ENCODE measurements at regions of chr11 and their contacts with region 1.

Region 1: DNA sequence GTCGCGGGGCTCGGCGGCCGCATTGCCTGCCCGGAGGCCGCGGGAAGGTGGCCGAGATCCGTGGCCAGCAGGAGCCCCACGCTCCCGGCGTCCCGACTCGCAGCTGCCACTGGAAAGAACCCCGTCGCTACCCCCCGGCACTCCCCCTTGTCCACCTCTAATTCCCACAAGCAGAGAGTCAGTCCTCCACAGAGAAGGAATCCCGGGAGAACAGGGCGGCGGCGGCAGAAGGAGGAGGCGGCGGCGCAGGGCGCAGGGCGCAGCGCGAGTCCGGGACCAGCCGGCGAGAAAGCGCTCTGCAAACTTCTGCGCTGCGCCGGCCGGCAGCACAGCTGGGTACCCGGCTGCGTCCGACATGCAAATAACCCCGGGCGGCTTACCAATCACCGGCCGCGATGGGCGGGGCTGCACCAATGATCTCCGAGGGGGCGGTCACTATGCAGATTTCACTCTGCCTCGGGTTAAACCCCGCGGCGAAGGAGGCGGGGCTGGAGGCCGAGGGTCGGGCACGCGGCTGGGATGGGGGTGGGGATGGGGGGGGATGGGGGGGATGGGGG is at the start of gene ABTB2:
- DNase-seq: peak; percentile 93 to 99
- H3K4me3 ChIP-seq: peak within 1 kb of the TSS; percentile 92
- H3K27ac ChIP-seq: peak within 1 kb of the TSS; percentile 67
- H3K4me1 ChIP-seq: peaks cover 41% of the 10 kb centered on the region
- H3K27me3 ChIP-seq: no peaks in the 10 kb centered on the region
- CTCF ChIP-seq: no peak
- total RNA-seq, gene ABTB2: 12.7 and 12.9 TPM in 2 replicates

Region 2: DNA sequence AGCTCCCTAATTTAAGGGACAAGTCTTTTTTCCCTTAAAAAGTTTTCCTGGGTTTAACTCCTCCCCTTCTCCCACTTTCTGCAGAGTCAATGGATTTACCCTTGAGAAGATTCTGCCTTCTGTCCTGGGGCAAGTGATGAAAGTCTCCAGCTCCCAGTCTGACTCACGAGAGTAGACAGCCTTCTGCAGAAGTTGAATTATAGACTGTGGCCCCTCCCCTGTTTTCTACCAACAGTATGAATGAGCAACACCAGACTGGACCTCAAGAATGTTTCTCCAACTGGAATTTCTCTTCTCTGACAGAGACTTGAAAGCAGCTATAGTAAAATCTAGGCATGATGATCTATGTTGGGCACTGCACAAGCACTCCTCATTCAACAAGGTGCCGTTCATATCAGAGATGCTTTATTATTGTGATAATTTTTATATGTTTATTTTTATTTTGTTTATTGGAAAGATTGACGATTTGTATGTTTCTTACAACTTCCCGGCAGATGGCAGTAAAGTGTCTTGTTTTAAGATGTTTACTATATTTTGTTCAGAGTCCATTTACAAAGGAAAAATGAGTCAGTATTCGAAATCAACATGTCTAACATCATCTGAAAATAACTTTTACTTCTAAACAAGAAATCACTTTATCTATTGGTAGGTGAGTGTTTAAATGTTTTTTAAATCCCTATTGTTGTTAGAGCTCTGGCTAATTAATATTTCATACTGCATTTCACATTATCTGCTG is 522.5 kb before region 1 on chr11:
- CTCF ChIA-PET with region 1: no interaction called
- POLR2A ChIA-PET with region 1: no interaction called
- intact Hi-C with region 1: loop called (anchors 1 kb)
- DNase-seq: peak; percentile 18 to 69
- H3K4me3 ChIP-seq: no peak overlapping the region
- H3K27ac ChIP-seq: no peak overlapping the region
- H3K4me1 ChIP-seq: peaks cover 32% of the 10 kb centered on the region
- H3K27me3 ChIP-seq: no peaks in the 10 kb centered on the region
- CTCF ChIP-seq: peak; percentile 79

Region 3: GRCh38 chr11:33996498-33997454 is 361.0 kb before region 1 on chr11:
- CTCF ChIA-PET with region 1: no interaction called
- POLR2A ChIA-PET with region 1: no interaction called
- intact Hi-C with region 1: loop called (anchors 1 kb)
- DNase-seq: peak; percentile 73 to 81
- H3K4me3 ChIP-seq: peak overlapping the region; percentile 17
- H3K27ac ChIP-seq: no peak overlapping the region
- H3K4me1 ChIP-seq: peaks cover 11% of the 10 kb centered on the region
- H3K27me3 ChIP-seq: no peaks in the 10 kb centered on the region
- CTCF ChIP-seq: peak; percentile 93

Region 4: GRCh38 chr11:34149786-34150185 is 208.0 kb before region 1 on chr11:
- CTCF ChIA-PET with region 1: no interaction called
- POLR2A ChIA-PET with region 1: no interaction called
- intact Hi-C with region 1: loop called (anchors 1 kb)
- DNase-seq: peak in 1 of 2 experiments; percentile 33
- H3K4me3 ChIP-seq: no peak overlapping the region
- H3K27ac ChIP-seq: no peak overlapping the region
- H3K4me1 ChIP-seq: no peaks in the 10 kb centered on the region
- H3K27me3 ChIP-seq: no peaks in the 10 kb centered on the region
- CTCF ChIP-seq: 0 out of 2 replicates have a peak, but pooled peaks have one; percentile 49

Region 5: GRCh38 chr11:34192481-34193401 is 165.0 kb before region 1 on chr11:
- CTCF ChIA-PET with region 1: no interaction called
- POLR2A ChIA-PET with region 1: interaction called, 16 read pairs
- intact Hi-C with region 1: loop called (anchors 1 kb)
- DNase-seq: peak; percentile 83 to 85
- H3K4me3 ChIP-seq: no peak overlapping the region
- H3K27ac ChIP-seq: peak overlapping the region; percentile 25; the same call in 1 of the 2 replicates
- H3K4me1 ChIP-seq: peaks cover 37% of the 10 kb centered on the region
- H3K27me3 ChIP-seq: no peaks in the 10 kb centered on the region
- CTCF ChIP-seq: no peak

Region 6: GRCh38 chr11:34274723-34275401 is 82.9 kb before region 1 on chr11:
- CTCF ChIA-PET with region 1: interaction called, 4 read pairs
- POLR2A ChIA-PET with region 1: no interaction called
- intact Hi-C with region 1: loop called (anchors 2 kb)
- DNase-seq: peak; percentile 99 to 100
- H3K4me3 ChIP-seq: peak overlapping the region; percentile 2; the same call in 1 of the 2 replicates
- H3K27ac ChIP-seq: peak overlapping the region; percentile 77
- H3K4me1 ChIP-seq: peaks cover 34% of the 10 kb centered on the region
- H3K27me3 ChIP-seq: no peaks in the 10 kb centered on the region
- CTCF ChIP-seq: no peak

Region 7: GRCh38 chr11:34327804-34328631 is 29.8 kb before region 1 on chr11:
- CTCF ChIA-PET with region 1: no interaction called
- POLR2A ChIA-PET with region 1: no interaction called
- intact Hi-C with region 1: no loop called
- DNase-seq: no peak
- H3K4me3 ChIP-seq: no peak overlapping the region
- H3K27ac ChIP-seq: no peak overlapping the region
- H3K4me1 ChIP-seq: peaks cover 52% of the 10 kb centered on the region
- H3K27me3 ChIP-seq: no peaks in the 10 kb centered on the region
- CTCF ChIP-seq: no peak

Region 8: DNA sequence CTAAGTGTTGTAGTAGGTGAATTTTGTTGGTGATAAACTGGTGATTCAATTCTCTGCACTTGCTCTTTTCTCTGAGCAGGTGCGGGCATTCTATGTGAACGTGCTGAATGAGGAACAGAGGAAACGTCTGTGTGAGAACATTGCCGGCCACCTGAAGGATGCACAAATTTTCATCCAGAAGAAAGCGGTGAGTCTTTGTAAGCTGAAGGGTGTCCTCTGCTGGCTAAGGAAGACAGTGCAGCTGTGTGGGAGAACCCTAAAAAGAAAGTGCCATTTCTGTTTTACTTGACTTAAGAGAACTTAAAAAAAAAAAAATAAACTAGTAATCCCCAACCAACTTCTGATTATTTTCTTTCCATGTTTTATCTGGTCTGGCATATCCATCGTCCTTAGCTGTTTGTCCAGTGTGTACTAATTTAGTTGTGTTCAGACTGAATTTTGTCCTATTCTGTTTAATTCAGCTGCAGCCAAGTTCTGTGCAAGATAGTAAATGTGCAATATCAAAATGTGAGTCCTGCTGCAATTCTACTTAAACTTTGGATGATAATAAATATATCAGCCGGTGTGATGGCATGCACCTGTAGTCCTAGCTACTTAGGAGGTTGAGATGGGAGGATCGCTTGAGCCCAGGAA is 110.5 kb after region 1 on chr11:
- CTCF ChIA-PET with region 1: no interaction called
- POLR2A ChIA-PET with region 1: no interaction called
- intact Hi-C with region 1: loop called (anchors 2 kb)
- DNase-seq: peak; percentile 46 to 55
- H3K4me3 ChIP-seq: no peak overlapping the region
- H3K27ac ChIP-seq: no peak overlapping the region
- H3K4me1 ChIP-seq: no peaks in the 10 kb centered on the region
- H3K27me3 ChIP-seq: no peaks in the 10 kb centered on the region
- CTCF ChIP-seq: peak; percentile 91

Region 9: GRCh38 chr11:34552270-34552669 is 194.5 kb after region 1 on chr11:
- CTCF ChIA-PET with region 1: no interaction called
- POLR2A ChIA-PET with region 1: no interaction called
- intact Hi-C with region 1: no loop called
- DNase-seq: no peak
- H3K4me3 ChIP-seq: no peak overlapping the region
- H3K27ac ChIP-seq: no peak overlapping the region
- H3K4me1 ChIP-seq: no peaks in the 10 kb centered on the region
- H3K27me3 ChIP-seq: no peaks in the 10 kb centered on the region
- CTCF ChIP-seq: no peak

Measured in PC-9 (cell line).